Caco-2 (cell line): ENCODE measurements at regions of chr9 and their contacts with region 1.

Region 1: GRCh38 chr9:131317011-131317422 is 27.5 kb downstream of the PLPP7 start:
- DNase-seq: peak; percentile 85 to 90
- H3K4me3 ChIP-seq: no peak overlapping the region
- H3K4me3 Mint-ChIP-seq: no peak overlapping the region
- H3K27ac Mint-ChIP-seq: peak overlapping the region; percentile 72
- H3K4me1 ChIP-seq: peaks cover 42% of the 10 kb centered on the region
- H3K4me1 Mint-ChIP-seq: peaks cover 22% of the 10 kb centered on the region
- H3K27me3 ChIP-seq: no peaks in the 10 kb centered on the region
- H3K27me3 Mint-ChIP-seq: no peaks in the 10 kb centered on the region
- CTCF ChIP-seq: no peak

Region 2: GRCh38 chr9:131082774-131083512 is 234.1 kb before region 1 on chr9:
- CTCF ChIA-PET with region 1: no interaction called
- POLR2A ChIA-PET with region 1: no interaction called
- intact Hi-C with region 1: no loop called
- DNase-seq: no peak
- H3K4me3 ChIP-seq: no peak overlapping the region
- H3K4me3 Mint-ChIP-seq: no peak overlapping the region
- H3K27ac Mint-ChIP-seq: no peak overlapping the region
- H3K4me1 ChIP-seq: no peaks in the 10 kb centered on the region
- H3K4me1 Mint-ChIP-seq: no peaks in the 10 kb centered on the region
- H3K27me3 ChIP-seq: no peaks in the 10 kb centered on the region
- H3K27me3 Mint-ChIP-seq: no peaks in the 10 kb centered on the region
- CTCF ChIP-seq: peak in 1 of 2 experiments; percentile 24

Region 3: DNA sequence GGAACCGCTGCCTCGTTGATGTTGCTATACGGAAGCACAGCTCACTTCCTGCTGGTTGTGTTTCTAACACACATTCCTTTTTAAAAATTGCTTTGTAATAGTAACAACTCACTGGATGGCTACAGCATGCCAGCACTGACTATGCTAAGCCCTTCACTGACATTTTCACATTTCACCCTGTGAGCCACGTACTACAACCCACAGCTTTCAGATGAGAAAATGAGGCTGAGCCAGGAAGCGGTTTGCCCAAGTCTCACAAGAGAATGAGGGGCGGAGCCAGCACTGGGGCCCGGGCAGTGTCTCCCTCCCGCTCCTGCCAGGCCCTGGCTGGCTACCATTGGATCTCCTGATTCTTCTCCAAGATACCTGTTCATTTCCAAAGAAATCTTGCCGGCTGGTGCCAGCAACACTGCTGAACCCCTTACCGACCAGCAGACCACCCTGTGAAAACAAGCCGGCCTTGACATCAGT is 79.1 kb before region 1 on chr9:
- CTCF ChIA-PET with region 1: no interaction called
- POLR2A ChIA-PET with region 1: no interaction called
- intact Hi-C with region 1: no loop called
- DNase-seq: no peak
- H3K4me3 ChIP-seq: no peak overlapping the region
- H3K4me3 Mint-ChIP-seq: no peak overlapping the region
- H3K27ac Mint-ChIP-seq: peak overlapping the region; percentile 20
- H3K4me1 ChIP-seq: no peaks in the 10 kb centered on the region
- H3K4me1 Mint-ChIP-seq: no peaks in the 10 kb centered on the region
- H3K27me3 ChIP-seq: no peaks in the 10 kb centered on the region
- H3K27me3 Mint-ChIP-seq: no peaks in the 10 kb centered on the region
- CTCF ChIP-seq: no peak

Region 4: DNA sequence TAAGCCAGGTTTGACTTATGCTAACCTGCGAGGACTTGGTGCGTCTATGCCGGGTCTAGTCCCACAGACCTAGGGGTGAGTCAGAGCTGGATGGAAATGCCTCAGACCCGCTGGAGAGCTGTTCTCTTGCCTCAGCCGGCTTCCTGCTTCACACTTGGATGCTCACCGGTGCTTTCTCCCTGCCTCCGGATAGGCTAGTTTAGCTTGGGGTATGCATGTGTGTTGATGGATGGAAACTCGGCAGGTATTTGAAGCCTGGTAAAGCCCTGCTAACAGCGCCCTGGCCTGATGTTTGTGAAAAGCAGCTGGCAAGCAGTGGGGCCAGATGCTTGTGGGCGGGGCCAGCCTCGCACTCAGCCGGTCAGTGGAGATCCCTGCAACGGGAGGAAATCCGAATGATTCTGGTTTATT is 106.2 kb after region 1 on chr9:
- CTCF ChIA-PET with region 1: no interaction called
- POLR2A ChIA-PET with region 1: interaction called, 11 read pairs
- intact Hi-C with region 1: no loop called
- DNase-seq: no peak
- H3K4me3 ChIP-seq: no peak overlapping the region
- H3K4me3 Mint-ChIP-seq: no peak overlapping the region
- H3K27ac Mint-ChIP-seq: no peak overlapping the region
- H3K4me1 ChIP-seq: peaks cover 7% of the 10 kb centered on the region
- H3K4me1 Mint-ChIP-seq: peaks cover 31% of the 10 kb centered on the region
- H3K27me3 ChIP-seq: no peaks in the 10 kb centered on the region
- H3K27me3 Mint-ChIP-seq: no peaks in the 10 kb centered on the region
- CTCF ChIP-seq: no peak

Region 5: GRCh38 chr9:131809941-131810344 is 492.9 kb after region 1 on chr9:
- CTCF ChIA-PET with region 1: no interaction called
- POLR2A ChIA-PET with region 1: no interaction called
- intact Hi-C with region 1: no loop called
- DNase-seq: no peak
- H3K4me3 ChIP-seq: no peak overlapping the region
- H3K4me3 Mint-ChIP-seq: no peak overlapping the region
- H3K27ac Mint-ChIP-seq: no peak overlapping the region
- H3K4me1 ChIP-seq: no peaks in the 10 kb centered on the region
- H3K4me1 Mint-ChIP-seq: no peaks in the 10 kb centered on the region
- H3K27me3 ChIP-seq: no peaks in the 10 kb centered on the region; the same call in 1 of the 2 replicates
- H3K27me3 Mint-ChIP-seq: peaks cover 21% of the 10 kb centered on the region
- CTCF ChIP-seq: no peak